ENCODE measurements at regions of chrX and their contacts with region 1.

Region 1: DNA sequence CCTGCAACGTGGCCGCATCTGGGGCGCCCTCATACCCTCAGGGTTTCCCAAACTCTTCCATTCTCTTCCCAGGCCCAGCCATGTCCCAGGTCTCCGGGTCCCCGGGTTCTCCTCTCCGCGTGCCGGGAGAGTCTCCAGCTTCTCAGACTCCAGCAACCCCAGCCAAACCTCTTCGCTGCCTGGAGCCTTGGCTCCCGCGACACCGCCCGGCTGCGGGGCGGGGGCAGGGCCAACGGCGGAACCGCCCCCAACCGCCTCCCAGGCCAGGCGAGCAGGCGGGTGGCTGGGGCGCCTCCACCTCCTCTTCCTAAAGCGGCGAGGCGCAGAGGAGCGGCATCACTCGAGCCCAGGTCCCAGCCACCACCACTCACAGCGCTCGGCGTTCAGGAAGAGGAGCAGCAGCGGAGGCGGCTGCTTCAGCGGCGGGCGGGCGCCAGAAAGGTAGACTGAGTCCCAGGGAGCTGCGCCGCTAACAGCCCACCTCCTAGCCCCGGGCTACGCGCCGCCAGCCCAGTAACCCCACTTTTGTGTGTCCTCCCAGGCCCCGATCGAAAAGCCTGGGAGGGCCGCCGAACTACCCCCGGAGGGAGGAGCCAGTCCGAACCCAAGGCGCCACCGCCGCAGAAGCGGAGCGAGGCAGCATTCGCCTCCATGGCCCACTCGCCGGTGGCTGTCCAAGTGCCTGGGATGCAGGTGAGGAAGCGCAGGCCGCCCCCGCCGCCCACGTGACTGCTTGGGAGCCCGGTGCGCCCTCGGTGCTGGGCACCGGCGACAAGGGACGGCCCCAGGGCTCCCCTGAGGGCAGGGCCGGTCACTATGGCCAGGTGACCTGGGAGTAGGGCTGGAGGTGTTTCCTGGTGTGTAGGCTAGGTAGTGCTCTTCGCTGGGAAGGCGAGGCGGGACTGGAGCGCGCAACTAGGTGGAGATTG is at the start of gene STK26:
- DNase-seq: peak; percentile 80
- ATAC-seq: peak; percentile 84
- H3K4me3 ChIP-seq: peak within 1 kb of the TSS; percentile 64 to 81 (median 75)
- H3K4me3 Mint-ChIP-seq: peak within 1 kb of the TSS; percentile 96
- H3K27ac ChIP-seq: peak within 1 kb of the TSS; percentile 66 to 77
- H3K27ac Mint-ChIP-seq: peak within 1 kb of the TSS; percentile 91
- H3K4me1 ChIP-seq: peaks cover 8 to 19% of the 10 kb centered on the region in 2 donors
- H3K4me1 Mint-ChIP-seq: peaks cover 31% of the 10 kb centered on the region
- H3K27me3 ChIP-seq: no peaks in the 10 kb centered on the region
- H3K27me3 Mint-ChIP-seq: no peaks in the 10 kb centered on the region
- CTCF ChIP-seq: no peak
- total RNA-seq, gene STK26: 32.1 and 34.6 TPM in 2 replicates

Region 2: DNA sequence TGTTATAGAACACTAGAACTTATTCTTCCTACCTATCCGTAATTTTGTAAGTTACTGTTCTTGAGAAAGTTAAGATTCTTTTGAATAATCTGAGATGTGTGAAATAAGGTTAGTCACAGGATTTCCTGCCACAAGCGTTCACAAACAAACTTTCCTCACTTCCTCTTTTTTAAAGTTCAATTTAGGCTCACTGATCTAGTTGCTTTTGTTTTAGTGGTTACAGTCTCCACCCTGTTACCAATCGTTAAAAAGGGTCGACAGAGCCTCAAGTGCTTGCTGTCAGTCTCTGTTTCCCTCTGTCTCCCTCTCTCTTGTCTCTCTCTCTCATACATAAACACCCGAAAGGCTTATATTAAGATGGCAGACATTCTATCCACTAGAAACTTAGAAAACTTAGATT is 36.0 kb before region 1 on chrX:
- CTCF ChIA-PET with region 1: no interaction called
- POLR2A ChIA-PET with region 1: interaction called, 4 read pairs
- intact Hi-C with region 1: loop called (anchors 1 kb)
- DNase-seq: peak; percentile 74
- ATAC-seq: peak; percentile 93
- H3K4me3 ChIP-seq: peak overlapping the region in 3 of 5 experiments; percentile 3 to 30 (median 30)
- H3K4me3 Mint-ChIP-seq: peak overlapping the region; percentile 61
- H3K27ac ChIP-seq: peak overlapping the region; percentile 83 to 87
- H3K27ac Mint-ChIP-seq: peak overlapping the region; percentile 98
- H3K4me1 ChIP-seq: peaks cover 42 to 45% of the 10 kb centered on the region in 2 donors
- H3K4me1 Mint-ChIP-seq: peaks cover 53% of the 10 kb centered on the region
- H3K27me3 ChIP-seq: no peaks in the 10 kb centered on the region
- H3K27me3 Mint-ChIP-seq: no peaks in the 10 kb centered on the region
- CTCF ChIP-seq: no peak

Region 3: GRCh38 chrX:132059973-132060540 is 36.8 kb after region 1 on chrX:
- CTCF ChIA-PET with region 1: no interaction called
- POLR2A ChIA-PET with region 1: no interaction called
- intact Hi-C with region 1: loop called (anchors 5 kb)
- DNase-seq: no peak
- ATAC-seq: no peak
- H3K4me3 ChIP-seq: no peak overlapping the region
- H3K4me3 Mint-ChIP-seq: no peak overlapping the region
- H3K27ac ChIP-seq: no peak overlapping the region
- H3K27ac Mint-ChIP-seq: peak overlapping the region; percentile 5
- H3K4me1 ChIP-seq: no peaks in the 10 kb centered on the region
- H3K4me1 Mint-ChIP-seq: peaks cover 20% of the 10 kb centered on the region
- H3K27me3 ChIP-seq: no peaks in the 10 kb centered on the region
- H3K27me3 Mint-ChIP-seq: no peaks in the 10 kb centered on the region
- CTCF ChIP-seq: no peak

Measured in B cell (primary cell).